ENCODE measurements at regions of chr1 and their contacts with region 1.

Region 1: DNA sequence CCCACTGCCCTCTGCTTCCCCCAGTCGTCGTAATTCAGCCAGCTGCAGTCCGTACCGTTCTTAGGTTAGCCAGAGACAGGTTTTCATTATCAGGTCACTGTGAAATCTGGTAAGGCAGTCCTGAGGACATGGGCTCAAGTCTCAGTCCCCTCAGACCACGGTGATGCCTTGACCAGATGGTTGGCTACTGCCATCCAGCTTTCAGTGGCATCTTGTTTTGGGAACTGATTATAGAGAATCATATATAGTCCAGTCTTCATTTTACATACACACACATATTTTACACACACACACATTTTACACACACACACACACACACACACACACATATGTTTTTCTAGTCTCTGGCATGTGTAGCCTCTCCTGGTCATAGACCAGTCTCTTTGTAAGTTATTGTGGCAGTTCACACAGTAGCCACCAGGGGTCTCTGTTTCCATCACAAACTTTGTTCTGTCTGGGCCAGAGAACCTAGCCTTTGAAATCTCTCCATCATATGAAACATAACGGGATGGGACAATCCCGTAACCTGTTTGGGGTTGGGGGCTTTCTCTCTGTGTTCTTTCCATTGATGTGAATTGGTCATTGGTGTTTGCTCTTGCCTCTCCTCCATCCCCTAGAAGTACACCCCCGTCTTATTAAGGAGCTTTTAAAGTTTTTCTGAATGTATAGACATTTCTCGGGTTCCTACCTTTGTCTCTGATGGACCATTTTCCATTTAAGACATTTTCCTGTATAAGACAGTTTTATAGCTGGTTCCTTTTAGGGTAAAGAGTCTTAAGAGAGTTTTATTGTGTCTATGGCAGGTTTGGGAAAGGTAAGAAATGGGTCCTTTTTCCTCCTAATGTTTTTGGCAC is 8.4 kb upstream of the IKBKE start:
- DNase-seq: peak; percentile 79
- CTCF ChIP-seq: peak; percentile 81

Region 2: DNA sequence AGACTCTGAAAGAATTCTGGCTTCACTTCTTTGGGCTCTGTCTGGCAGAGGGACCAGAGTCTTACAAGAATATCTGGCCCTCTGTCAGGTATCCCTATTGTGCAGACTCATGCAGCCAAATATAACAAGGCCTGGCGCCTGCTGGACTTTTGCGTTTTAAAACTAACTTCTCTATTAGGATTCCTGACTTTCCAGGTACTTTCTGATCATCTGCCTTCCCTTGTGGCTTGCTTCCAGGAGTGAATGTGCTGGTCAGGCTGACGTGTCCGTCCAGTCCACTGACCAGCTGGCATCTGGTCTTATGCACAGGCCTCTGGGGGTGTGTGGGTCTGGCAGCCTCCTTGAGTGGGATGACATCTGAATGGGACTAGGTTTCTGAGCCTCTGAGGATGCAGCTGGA is 677.9 kb before region 1 on chr1:
- CTCF ChIA-PET with region 1: no interaction called
- POLR2A ChIA-PET with region 1: interaction called, 10 read pairs
- DNase-seq: no peak
- CTCF ChIP-seq: no peak

Region 3: GRCh38 chr1:206445116-206445515 is 16.7 kb before region 1 on chr1:
- CTCF ChIA-PET with region 1: interaction called, 36 read pairs
- POLR2A ChIA-PET with region 1: no interaction called
- DNase-seq: no peak
- CTCF ChIP-seq: no peak

Region 4: DNA sequence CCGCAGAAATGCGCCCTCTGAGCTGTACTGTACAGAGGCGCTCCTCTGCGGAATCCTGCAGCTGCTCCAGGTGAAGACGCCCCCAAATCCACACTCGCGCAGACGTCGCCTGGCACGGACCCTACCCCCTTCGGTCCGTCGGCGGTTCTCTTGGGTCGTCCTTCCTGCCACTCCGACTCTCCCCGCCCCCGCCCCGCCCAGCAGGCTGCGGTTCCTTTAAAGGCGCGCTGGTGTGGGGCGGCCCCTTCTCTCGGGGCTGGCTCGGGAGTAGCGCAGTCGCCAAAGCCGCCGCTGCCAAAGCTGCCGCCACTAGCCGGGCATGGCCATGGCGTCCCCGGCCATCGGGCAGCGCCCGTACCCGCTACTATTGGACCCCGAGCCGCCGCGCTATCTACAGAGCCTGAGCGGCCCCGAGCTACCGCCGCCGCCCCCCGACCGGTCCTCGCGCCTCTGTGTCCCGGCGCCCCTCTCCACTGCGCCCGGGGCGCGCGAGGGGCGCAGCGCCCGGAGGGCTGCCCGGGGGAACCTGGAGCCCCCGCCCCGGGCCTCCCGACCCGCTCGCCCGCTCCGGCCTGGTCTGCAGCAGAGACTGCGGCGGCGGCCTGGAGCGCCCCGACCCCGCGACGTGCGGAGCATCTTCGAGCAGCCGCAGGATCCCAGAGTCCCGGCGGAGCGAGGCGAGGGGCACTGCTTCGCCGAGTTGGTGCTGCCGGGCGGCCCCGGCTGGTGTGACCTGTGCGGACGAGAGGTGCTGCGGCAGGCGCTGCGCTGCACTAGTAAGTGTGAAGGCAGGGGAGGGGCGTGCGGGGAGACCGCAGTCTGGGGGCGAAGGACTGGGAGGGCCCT is 45.7 kb after region 1 on chr1 and contains the start of gene RASSF5:
- CTCF ChIA-PET with region 1: no interaction called
- POLR2A ChIA-PET with region 1: no interaction called
- DNase-seq: peak; percentile 90
- CTCF ChIP-seq: no peak

Region 5: GRCh38 chr1:206572835-206573234 is 111.0 kb after region 1 on chr1:
- CTCF ChIA-PET with region 1: no interaction called
- POLR2A ChIA-PET with region 1: no interaction called
- DNase-seq: no peak
- CTCF ChIP-seq: no peak

Measured in GM10248 (cell line).